PC-3 (cell line): ENCODE measurements at regions of chr6 and their contacts with region 1.

Region 1: DNA sequence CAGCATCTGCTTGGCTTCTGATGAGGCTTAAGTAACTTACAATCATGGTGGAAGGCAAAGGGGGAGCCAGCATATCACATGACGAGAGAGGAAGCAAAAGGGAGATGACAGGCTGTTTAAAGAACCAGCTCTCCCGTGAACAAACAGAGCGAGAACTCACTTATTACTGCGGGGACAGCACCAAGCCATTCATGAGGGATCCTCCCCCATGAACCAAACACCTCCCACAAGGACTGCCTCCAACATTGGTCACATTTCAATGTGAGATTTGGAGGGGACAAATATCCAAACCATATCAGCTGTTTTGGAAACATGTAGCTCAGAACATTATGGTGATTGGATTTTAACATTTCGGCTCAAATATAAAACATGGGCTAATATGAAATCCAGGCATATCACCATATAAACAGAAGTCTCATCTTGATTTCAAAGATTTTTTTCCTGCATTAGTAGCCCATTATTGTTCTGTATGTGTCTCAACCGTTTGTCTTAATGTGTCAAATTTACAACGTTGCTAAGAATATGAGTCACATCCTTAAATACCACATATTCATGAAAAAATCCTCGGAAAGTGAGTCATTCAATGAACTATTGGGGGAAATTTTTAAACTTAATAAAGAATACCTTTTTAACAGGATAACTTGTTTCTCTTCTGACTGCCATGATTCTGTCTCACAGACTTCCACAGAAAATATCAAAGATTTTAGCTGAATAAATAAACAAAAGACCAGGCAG is 894.3 kb downstream of the TFAP2A start:
- DNase-seq: peak; percentile 84
- ATAC-seq: peak; percentile 70
- H3K4me3 ChIP-seq: no peak overlapping the region
- H3K27ac ChIP-seq: peak overlapping the region; percentile 36
- H3K4me1 ChIP-seq: peaks cover 53% of the 10 kb centered on the region
- H3K27me3 ChIP-seq: no peaks in the 10 kb centered on the region
- CTCF ChIP-seq: no peak

Region 2: GRCh38 chr6:9482030-9482738 is 38.4 kb before region 1 on chr6:
- CTCF ChIA-PET with region 1: no interaction called
- POLR2A ChIA-PET with region 1: no interaction called
- intact Hi-C with region 1: loop called (anchors 5 kb)
- DNase-seq: peak; percentile 92
- ATAC-seq: peak; percentile 93
- H3K4me3 ChIP-seq: peak overlapping the region; percentile 27; the same call in 1 of the 2 replicates
- H3K27ac ChIP-seq: peak overlapping the region; percentile 89
- H3K4me1 ChIP-seq: peaks cover 30% of the 10 kb centered on the region
- H3K27me3 ChIP-seq: no peaks in the 10 kb centered on the region
- CTCF ChIP-seq: no peak